ENCODE measurements at regions of chr19 and their contacts with region 1.

Region 1: DNA sequence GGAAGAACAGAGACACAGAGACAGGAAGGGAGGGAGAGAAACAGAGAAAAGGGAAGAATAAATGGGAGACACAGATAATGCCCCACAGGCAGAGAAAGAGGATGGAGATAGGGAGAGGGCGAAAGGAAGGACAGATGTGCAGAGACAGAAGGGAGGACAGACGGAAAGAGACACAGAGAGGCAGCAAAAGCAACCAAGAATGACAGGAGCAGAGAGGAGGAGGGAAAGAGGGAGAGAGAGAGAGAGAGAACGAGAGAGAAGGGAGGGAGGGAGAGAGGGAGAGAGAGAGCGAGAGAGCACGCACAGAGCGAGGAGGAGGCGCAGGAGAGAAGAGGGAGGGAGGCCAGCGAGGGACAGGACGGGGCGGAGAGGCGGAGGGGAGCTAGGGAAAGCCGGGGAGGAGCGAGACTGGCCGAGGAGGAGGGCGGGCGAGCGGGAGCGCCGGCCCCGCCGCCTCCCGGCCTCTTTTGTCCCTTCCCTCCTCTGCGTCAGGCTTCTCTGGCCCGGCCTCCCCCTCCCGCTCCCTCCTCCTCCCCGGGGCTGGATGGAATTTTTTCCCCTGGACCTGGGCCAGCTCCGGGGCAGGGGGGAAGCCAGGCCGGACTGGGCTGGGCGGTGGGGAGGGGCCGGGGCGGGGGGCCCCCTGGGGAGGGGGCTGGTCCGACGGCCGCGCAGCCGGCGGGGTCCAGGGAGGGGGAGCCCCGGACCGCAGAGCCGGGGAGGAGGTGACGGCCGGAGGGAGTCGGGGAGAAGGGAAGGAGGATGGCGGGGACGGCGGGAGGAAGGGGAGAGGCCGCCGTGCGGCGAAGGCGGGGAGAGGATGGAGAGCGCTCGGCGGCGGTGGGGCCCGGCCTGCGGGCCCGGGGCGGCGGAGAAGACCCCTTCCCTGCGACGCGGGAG is 4.2 kb upstream of the SPACA6 start:
- DNase-seq: peak; percentile 72 to 96
- H3K4me3 ChIP-seq: peak overlapping the region; percentile 89
- H3K27ac ChIP-seq: no peak overlapping the region; the same call in 1 of the 2 replicates
- H3K4me1 ChIP-seq: peaks cover 29% of the 10 kb centered on the region
- H3K27me3 ChIP-seq: no peaks in the 10 kb centered on the region
- CTCF ChIP-seq: peak; percentile 33; the same call in 1 of the 2 replicates

Region 2: DNA sequence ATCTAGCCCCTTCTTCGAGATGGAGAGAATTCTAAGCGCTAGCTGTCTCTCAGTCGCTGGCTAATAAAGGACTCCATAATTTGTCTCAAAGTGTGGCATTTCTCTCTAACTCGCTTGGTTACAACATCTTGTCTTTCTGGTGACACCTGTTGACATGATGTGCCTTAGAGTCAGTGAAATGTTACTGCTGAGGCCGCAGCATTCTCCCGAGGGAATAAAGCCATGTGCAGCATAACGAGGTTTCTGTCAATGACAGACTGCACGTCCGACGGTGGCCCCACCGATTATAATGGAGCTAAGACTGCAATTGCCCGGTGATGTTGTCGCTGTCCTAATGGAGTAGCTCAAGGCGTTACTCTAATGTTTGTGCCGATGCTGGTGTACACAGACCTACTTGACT is 938.9 kb before region 1 on chr19:
- CTCF ChIA-PET with region 1: no interaction called
- POLR2A ChIA-PET with region 1: interaction called, 14 read pairs
- intact Hi-C with region 1: no loop called
- DNase-seq: no peak
- H3K4me3 ChIP-seq: no peak overlapping the region
- H3K27ac ChIP-seq: no peak overlapping the region
- H3K4me1 ChIP-seq: no peaks in the 10 kb centered on the region
- H3K27me3 ChIP-seq: peaks cover 75% of the 10 kb centered on the region
- CTCF ChIP-seq: no peak

Region 3: DNA sequence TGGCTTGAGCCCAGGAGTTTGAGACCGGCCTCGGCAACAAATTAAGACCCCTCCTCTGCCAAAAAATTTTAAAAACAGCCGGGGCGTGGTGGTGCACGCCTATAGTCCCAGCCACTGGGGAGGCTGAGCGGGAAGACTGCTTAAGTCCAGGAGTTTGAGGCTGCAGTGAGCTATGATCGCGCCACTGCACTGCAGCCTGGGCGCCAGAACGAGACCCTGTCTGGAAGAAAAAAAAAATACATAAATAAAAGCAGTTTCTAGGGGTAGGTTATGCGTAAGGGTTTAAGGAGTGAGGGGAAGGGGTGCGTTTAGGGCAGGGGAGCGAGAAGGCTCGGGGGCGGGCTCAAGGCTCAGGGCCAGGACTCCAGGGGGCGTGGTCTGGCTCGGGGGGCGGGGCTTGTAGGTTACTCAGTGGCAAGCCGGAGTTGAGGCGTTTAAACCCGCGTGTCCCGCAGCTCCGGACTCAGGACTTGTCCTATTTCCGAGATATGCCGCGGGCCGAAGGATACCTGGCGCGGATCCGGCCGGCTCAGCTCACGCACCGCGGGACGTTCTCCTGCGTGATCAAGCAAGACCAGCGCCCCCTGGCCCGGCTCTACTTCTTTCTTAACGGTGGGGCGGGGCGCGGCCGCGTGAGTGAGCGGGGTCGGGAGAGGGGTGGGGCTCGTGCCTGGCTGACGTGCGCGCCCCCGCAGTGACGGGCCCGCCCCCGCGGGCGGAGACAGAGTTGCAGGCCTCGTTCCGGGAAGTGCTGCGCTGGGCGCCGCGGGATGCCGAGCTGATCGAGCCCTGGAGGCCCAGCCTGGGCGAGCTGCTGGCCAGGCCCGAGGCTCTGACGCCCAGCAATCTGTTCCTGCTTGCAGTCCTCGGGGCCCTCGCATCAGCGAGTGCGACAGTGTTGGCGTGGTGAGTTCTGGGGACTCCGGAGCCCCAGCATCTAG is 14.9 kb after region 1 on chr19:
- CTCF ChIA-PET with region 1: interaction called, 3 read pairs
- POLR2A ChIA-PET with region 1: interaction called, 35 read pairs
- intact Hi-C with region 1: loop called (anchors 1 kb)
- DNase-seq: peak; percentile 83 to 97
- H3K4me3 ChIP-seq: peak overlapping the region; percentile 70
- H3K27ac ChIP-seq: peak overlapping the region; percentile 26; the same call in 1 of the 2 replicates
- H3K4me1 ChIP-seq: peaks cover 8% of the 10 kb centered on the region; the same call in 1 of the 2 replicates
- H3K27me3 ChIP-seq: no peaks in the 10 kb centered on the region
- CTCF ChIP-seq: peak; percentile 62

Region 4: GRCh38 chr19:51719251-51719988 is 30.5 kb after region 1 on chr19:
- CTCF ChIA-PET with region 1: no interaction called
- POLR2A ChIA-PET with region 1: no interaction called
- intact Hi-C with region 1: no loop called
- DNase-seq: no peak
- H3K4me3 ChIP-seq: no peak overlapping the region
- H3K27ac ChIP-seq: no peak overlapping the region
- H3K4me1 ChIP-seq: no peaks in the 10 kb centered on the region
- H3K27me3 ChIP-seq: peaks cover 83% of the 10 kb centered on the region
- CTCF ChIP-seq: no peak

Region 5: GRCh38 chr19:52601025-52601973 is 912.4 kb after region 1 on chr19:
- CTCF ChIA-PET with region 1: no interaction called
- POLR2A ChIA-PET with region 1: no interaction called
- intact Hi-C with region 1: loop called (anchors 5 kb)
- DNase-seq: peak; percentile 72 to 95
- H3K4me3 ChIP-seq: peak overlapping the region; percentile 73
- H3K27ac ChIP-seq: no peak overlapping the region
- H3K4me1 ChIP-seq: no peaks in the 10 kb centered on the region; the same call in 1 of the 2 replicates
- H3K27me3 ChIP-seq: no peaks in the 10 kb centered on the region
- CTCF ChIP-seq: peak; percentile 57; the same call in 1 of the 2 replicates